ENCODE measurements at regions of chr13 and their contacts with region 1.

Region 1: DNA sequence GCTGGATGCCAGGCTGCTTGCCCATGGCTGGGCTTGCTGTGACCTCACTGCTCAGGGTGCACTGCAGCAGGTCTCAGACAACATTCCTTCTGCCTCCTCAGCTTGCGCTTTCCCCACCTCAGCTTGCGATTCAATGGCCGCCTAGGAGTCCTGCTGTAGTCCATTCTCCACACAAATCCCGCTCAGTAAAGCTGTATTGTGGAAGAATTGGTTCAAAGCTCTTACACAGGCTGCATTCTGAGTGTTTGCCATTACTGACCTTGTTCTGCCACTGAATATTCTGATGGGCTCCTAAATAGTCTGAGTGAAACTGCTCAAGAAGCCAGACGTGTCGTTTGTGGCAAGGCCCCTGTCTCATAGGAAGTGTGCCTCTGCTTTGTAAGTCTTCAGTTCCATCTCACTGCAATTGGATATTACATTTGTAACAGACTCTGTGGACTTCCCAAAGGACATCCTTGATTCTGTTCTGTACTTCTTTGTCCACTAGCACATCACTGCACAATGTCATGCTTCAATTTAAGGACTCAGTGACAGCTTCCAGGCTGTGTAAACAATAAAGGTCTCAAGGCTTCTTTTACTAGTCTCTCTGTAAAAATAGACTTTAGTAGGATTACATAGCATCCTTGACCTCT is 49.8 kb downstream of the KATNAL1 start:
- DNase-seq: peak; percentile 32
- ATAC-seq: peak; percentile 87

Region 2: GRCh38 chr13:30313311-30313710 is 55.7 kb after region 1 on chr13:
- intact Hi-C with region 1: loop called (anchors 10 kb)
- DNase-seq: no peak
- ATAC-seq: peak; percentile 52

Region 3: DNA sequence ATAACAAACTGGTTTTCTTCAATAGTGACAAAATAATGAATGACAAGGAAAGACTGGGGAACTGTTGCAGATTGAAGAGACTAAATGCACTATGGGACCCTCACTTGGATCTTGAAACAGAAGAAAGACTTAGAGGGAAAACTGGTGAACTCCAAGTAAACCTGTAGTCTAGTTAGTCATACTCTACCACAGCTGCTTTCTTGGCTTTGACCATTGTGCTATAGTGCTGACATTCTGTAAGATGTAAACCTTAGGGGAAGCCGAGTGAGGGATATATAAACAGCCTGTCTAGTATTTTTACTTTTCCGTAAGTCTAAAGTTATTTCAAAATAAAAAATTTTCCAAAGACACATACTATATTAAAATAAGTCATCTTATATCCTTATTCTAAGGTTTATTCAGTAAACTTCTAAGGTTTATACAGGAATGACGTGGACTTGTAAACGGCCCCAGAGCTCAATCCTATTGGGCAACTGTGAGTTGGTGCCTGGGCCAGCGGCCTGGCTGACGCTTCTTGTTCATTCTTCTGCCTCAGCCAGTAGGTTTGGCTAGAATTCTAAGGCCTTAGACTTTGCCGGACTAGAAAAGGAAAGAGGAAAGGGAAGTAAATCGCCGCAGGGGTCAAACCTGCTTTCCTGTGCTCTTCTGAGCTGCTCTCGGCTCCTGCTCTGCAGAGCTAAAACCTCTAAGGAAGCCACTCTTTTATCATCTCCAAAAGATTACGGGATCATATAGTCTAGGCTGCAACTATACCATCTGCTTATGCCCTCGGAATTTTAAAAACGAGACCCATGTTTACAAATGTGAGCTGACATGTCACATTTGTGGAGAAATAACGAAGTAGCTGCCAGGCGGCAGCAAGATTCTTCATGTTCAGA is 131.1 kb after region 1 on chr13:
- intact Hi-C with region 1: no loop called
- DNase-seq: peak; percentile 38
- ATAC-seq: peak; percentile 29

Region 4: GRCh38 chr13:30453727-30454126 is 196.1 kb after region 1 on chr13:
- intact Hi-C with region 1: loop called (anchors 10 kb)
- DNase-seq: no peak
- ATAC-seq: no peak

Region 5: GRCh38 chr13:31282741-31283455 is 1025.3 kb after region 1 on chr13:
- intact Hi-C with region 1: no loop called
- DNase-seq: no peak
- ATAC-seq: no peak

Measured in left ventricle myocardium superior (tissue), 1 donor.